ENCODE measurements at regions of chr9 and their contacts with region 1.

Region 1: DNA sequence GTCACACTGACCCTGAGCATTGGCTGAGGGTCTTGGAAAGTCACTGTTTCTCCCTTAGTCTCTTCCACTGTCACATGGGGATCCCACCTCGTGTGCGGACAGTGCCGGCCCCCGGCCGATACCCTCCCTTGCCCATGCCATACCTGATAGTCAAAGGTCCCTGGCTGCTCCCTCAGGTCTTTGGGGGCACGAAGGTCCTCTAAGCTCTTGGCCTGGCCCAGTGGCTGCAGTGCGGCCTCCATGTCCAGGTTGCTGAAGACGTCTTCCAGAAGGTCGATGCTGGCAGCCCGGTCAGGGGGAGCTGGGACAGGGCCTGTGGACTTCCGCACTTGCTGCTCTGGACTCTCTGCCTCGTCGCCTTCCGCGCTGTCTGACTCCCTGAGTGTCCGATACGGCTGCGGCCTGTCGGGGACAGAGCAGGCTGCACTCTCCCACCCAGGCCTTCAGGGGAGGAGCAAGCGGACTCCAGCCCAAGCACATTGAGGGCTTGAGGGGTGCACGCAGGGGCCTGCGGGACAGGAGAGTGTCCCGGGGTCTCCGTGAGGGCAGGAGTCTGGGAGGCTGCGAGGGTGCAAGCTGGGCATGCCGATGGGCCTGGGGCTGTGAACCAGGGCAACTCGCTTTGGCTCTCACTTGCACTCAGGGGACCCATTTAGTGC is 27.6 kb downstream of the CRB2 start:
- DNase-seq: no peak
- H3K4me3 ChIP-seq: no peak overlapping the region
- H3K27ac ChIP-seq: no peak overlapping the region
- H3K4me1 ChIP-seq: peaks cover 0 to 2% (median 0%) of the 10 kb centered on the region in 4 experiments
- H3K27me3 ChIP-seq: no peaks in the 10 kb centered on the region

Region 2: GRCh38 chr9:123360161-123361085 is 23.2 kb before region 1 on chr9:
- CTCF ChIA-PET with region 1: interaction called, 225 read pairs
- POLR2A ChIA-PET with region 1: no interaction called
- DNase-seq: peak; percentile 77 to 90 (median 87)
- H3K4me3 ChIP-seq: peak overlapping the region in 3 of 7 experiments; percentile 11 to 31 (median 24)
- H3K27ac ChIP-seq: peak overlapping the region in 1 of 2 experiments; percentile 14
- H3K4me1 ChIP-seq: peaks cover 0 to 28% (median 14%) of the 10 kb centered on the region in 4 experiments
- H3K27me3 ChIP-seq: no peaks in the 10 kb centered on the region

Region 3: GRCh38 chr9:123368023-123368422 is 15.6 kb before region 1 on chr9:
- CTCF ChIA-PET with region 1: interaction called, 24 read pairs
- POLR2A ChIA-PET with region 1: no interaction called
- DNase-seq: no peak
- H3K4me3 ChIP-seq: no peak overlapping the region
- H3K27ac ChIP-seq: no peak overlapping the region
- H3K4me1 ChIP-seq: peaks cover 0 to 7% (median 5%) of the 10 kb centered on the region in 4 experiments
- H3K27me3 ChIP-seq: peaks cover 0 to 25% (median 21%) of the 10 kb centered on the region in 5 experiments

Region 4: GRCh38 chr9:123482295-123482968 is 98.8 kb after region 1 on chr9:
- CTCF ChIA-PET with region 1: no interaction called
- POLR2A ChIA-PET with region 1: no interaction called
- DNase-seq: no peak
- H3K4me3 ChIP-seq: no peak overlapping the region
- H3K27ac ChIP-seq: no peak overlapping the region
- H3K4me1 ChIP-seq: no peaks in the 10 kb centered on the region
- H3K27me3 ChIP-seq: no peaks in the 10 kb centered on the region